Heart right ventricle (tissue), 16 donors: ENCODE measurements at regions of chr6 and their contacts with region 1.

Region 1: DNA sequence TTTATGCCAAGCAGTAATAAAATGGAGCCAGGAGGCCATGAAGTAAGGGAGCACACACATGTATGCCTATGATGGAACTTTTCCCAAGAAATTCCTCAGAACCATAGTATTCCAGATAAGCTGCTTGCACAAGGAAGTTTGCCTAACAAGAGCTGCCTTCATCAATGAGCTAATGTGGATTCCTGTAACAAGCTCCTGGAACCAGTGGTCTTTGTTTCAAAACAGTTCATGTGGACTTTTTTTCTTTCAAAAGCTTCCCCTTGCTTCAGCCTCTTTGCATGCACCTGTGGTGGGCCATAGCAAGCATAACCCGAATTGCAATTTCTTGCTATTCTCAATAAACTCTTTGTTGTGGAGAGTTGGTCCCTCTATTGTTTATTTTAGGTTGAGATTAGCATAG is 359.6 kb downstream of the UTRN start:
- DNase-seq: no peak
- ATAC-seq: no peak
- H3K4me3 ChIP-seq: no peak overlapping the region
- H3K27ac ChIP-seq: no peak overlapping the region
- H3K4me1 ChIP-seq: peaks cover 0 to 5% (median 0%) of the 10 kb centered on the region in 9 donors
- H3K27me3 ChIP-seq: no peaks in the 10 kb centered on the region
- CTCF ChIP-seq: no peak

Region 2: DNA sequence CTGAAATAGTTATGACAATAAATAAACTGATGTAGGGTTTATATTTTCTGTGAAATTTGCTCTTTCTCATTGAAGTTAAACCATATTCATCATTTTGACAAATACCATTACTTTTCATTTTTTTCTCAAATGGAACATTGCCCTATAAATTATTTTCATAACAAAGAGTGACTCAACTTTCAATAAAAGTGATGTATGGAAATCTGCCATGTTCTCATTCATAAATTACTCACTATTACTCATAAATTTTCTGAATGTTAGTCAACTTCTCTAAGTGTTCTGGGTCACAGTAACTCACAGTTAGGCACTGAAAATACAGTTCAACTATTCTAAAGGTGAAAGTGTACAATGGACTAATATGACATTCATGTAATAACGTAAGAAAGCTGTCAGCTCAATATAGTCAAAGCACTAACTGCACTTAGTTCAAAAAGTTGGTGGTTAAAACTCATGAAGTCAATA is 513.5 kb before region 1 on chr6:
- intact Hi-C with region 1: no loop called
- DNase-seq: no peak
- ATAC-seq: no peak
- H3K4me3 ChIP-seq: no peak overlapping the region
- H3K27ac ChIP-seq: no peak overlapping the region
- H3K4me1 ChIP-seq: no peaks in the 10 kb centered on the region
- H3K27me3 ChIP-seq: peaks cover 0 to 5% (median 0%) of the 10 kb centered on the region in 7 donors
- CTCF ChIP-seq: no peak

Region 3: DNA sequence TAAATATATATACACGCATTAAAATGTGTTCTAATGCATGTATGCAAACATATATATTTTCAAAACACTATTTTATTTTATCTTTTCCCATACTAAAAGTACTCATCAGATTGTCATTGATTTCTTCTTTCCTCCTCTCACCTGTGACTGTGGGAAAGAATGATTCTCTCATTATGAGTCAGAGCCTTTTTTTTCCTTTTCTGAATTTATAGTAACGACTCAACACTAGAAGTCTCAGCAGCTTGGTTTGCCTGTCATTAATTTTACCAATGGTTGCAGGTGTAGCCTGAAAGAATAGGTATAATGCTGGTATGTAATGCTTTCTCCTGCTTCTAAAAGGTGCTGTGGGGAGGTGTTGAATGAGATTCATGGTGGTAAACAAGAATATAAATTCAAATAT is 30.9 kb before region 1 on chr6:
- intact Hi-C with region 1: loop called in 1 of 10 experiments (anchors 2 kb)
- DNase-seq: no peak
- ATAC-seq: no peak
- H3K4me3 ChIP-seq: no peak overlapping the region
- H3K27ac ChIP-seq: no peak overlapping the region
- H3K4me1 ChIP-seq: no peaks in the 10 kb centered on the region
- H3K27me3 ChIP-seq: no peaks in the 10 kb centered on the region
- CTCF ChIP-seq: no peak